ENCODE measurements at regions of chr12 and their contacts with region 1.

Region 1: GRCh38 chr12:109110988-109111495 is 5.3 kb upstream of the ACACB start:
- H3K4me3 ChIP-seq: peak overlapping the region; percentile 47
- H3K27ac ChIP-seq: peak overlapping the region; percentile 77
- H3K4me1 ChIP-seq: peaks cover 11% of the 10 kb centered on the region
- CTCF ChIP-seq: no peak

Region 2: GRCh38 chr12:109087250-109087649 is 23.8 kb before region 1 on chr12:
- CTCF ChIA-PET with region 1: no interaction called
- POLR2A ChIA-PET with region 1: no interaction called
- H3K4me3 ChIP-seq: no peak overlapping the region
- H3K27ac ChIP-seq: no peak overlapping the region
- H3K4me1 ChIP-seq: no peaks in the 10 kb centered on the region
- CTCF ChIP-seq: no peak

Region 3: DNA sequence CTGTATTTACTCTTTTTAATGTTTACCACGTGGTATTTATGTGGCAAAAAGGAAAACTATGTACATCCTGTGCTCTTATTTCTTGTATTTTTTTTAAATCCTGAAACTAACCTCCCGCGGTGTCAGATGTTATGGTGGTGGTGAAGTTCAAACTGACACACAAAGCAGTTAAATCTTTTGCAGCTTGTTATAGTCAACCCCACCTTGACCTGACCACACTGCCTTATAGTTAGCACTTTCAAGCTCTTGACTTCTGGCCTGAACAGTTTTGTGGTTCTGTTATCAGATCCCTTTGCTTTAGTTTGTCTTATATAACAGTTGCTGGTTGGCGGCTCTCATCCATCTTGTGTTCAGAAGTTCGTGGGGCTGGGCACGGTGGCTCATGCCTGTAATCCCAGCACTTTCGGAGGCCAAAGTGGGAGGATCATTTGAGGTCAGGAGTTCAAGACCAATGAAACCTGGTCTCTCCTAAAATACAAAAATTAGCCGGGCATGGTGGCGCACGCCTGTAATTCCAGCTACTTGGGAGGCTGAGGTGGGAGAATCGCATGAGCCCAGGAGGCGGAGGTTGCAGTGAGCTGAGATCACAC is 11.5 kb before region 1 on chr12:
- CTCF ChIA-PET with region 1: interaction called, 21 read pairs
- POLR2A ChIA-PET with region 1: interaction called, 3 read pairs
- H3K4me3 ChIP-seq: no peak overlapping the region
- H3K27ac ChIP-seq: no peak overlapping the region
- H3K4me1 ChIP-seq: peaks cover 3% of the 10 kb centered on the region; the same call in 1 of the 2 replicates
- CTCF ChIP-seq: no peak

Region 4: GRCh38 chr12:109126784-109127183 is 15.7 kb after region 1 on chr12:
- CTCF ChIA-PET with region 1: interaction called, 22 read pairs
- POLR2A ChIA-PET with region 1: no interaction called
- H3K4me3 ChIP-seq: no peak overlapping the region
- H3K27ac ChIP-seq: no peak overlapping the region
- H3K4me1 ChIP-seq: no peaks in the 10 kb centered on the region
- CTCF ChIP-seq: no peak

Region 5: DNA sequence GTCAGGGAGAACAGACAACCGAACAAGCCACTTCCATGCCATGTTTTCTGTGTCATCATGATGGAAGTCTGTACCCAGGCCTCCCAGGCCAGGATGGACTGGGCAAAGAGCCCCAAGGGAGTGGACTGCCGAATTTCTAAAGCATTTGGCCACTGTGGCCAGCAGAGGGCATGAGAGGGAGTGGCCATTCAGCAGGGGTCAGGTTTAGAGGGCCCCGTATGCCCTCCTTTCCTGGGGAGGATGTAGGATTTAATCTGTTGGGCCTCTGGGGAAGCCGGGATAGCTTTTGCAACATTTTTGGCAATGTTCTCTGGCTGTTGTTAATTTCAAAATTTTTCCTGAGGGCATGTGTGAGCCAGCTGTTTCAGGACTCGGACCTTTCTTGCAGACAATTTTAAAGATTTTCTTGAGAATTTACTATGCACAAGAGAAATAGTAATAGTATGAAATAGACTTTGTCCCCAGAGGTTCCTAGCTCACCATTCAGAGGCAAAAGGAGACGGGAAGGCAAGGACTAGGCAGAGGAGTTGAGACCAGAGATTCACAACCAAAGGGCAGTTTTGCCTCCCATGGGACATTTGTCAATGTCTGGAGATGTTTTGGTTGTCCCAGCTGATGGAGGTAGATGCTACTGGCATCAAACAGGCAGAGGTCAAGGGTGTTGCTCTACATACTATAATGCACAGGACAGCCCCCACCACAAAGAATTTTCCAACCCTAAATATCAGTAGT is 23.3 kb after region 1 on chr12:
- CTCF ChIA-PET with region 1: interaction called, 13 read pairs
- POLR2A ChIA-PET with region 1: interaction called, 3 read pairs
- H3K4me3 ChIP-seq: no peak overlapping the region
- H3K27ac ChIP-seq: no peak overlapping the region
- H3K4me1 ChIP-seq: no peaks in the 10 kb centered on the region
- CTCF ChIP-seq: no peak; the same call in 1 of the 2 replicates

Measured in HEK293 (cell line).